Esophagus squamous epithelium (tissue), 5 donors: ENCODE measurements at regions of chr5 and their contacts with region 1.

Region 1: GRCh38 chr5:147223948-147224791 is 10.7 kb upstream of the STK32A start:
- DNase-seq: no peak
- H3K4me3 ChIP-seq: no peak overlapping the region
- H3K27ac ChIP-seq: no peak overlapping the region
- H3K4me1 ChIP-seq: no peaks in the 10 kb centered on the region
- H3K27me3 ChIP-seq: no peaks in the 10 kb centered on the region
- CTCF ChIP-seq: peak; percentile 19 to 55 (median 45)
- POLR2A ChIP-seq: no peak

Region 2: DNA sequence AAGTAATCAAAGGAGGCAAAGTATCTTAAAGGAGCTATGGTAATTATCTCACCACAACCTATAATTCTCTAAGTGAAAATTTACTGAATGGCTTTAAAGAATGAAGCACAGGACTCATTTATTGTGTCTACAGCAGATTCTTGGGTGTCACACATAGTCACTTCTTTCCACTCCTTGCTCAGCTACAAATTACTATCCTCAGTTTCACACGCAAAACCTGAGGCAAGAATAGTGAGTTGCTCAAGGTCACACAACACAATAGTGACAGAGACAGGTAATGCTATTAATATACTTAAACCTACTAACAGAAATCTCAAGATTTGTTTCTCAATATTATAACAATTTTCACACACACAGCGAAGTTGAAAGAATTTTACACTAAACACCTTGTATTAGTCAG is 110.2 kb before region 1 on chr5:
- intact Hi-C with region 1: no loop called
- DNase-seq: no peak
- H3K4me3 ChIP-seq: no peak overlapping the region
- H3K27ac ChIP-seq: no peak overlapping the region
- H3K4me1 ChIP-seq: no peaks in the 10 kb centered on the region
- H3K27me3 ChIP-seq: no peaks in the 10 kb centered on the region
- CTCF ChIP-seq: no peak
- POLR2A ChIP-seq: no peak

Region 3: GRCh38 chr5:147369742-147370374 is 145.7 kb after region 1 on chr5:
- intact Hi-C with region 1: loop called (anchors 5 kb)
- DNase-seq: no peak
- H3K4me3 ChIP-seq: no peak overlapping the region
- H3K27ac ChIP-seq: no peak overlapping the region
- H3K4me1 ChIP-seq: no peaks in the 10 kb centered on the region
- H3K27me3 ChIP-seq: no peaks in the 10 kb centered on the region
- CTCF ChIP-seq: peak in 5 of 6 experiments; percentile 33 to 63 (median 45)
- POLR2A ChIP-seq: no peak

Region 4: GRCh38 chr5:147563466-147564123 is 339.4 kb after region 1 on chr5:
- intact Hi-C with region 1: no loop called
- DNase-seq: no peak
- H3K4me3 ChIP-seq: no peak overlapping the region
- H3K27ac ChIP-seq: no peak overlapping the region
- H3K4me1 ChIP-seq: peaks cover 0 to 4% (median 0%) of the 10 kb centered on the region in 3 donors
- H3K27me3 ChIP-seq: no peaks in the 10 kb centered on the region
- CTCF ChIP-seq: no peak
- POLR2A ChIP-seq: no peak

Region 5: GRCh38 chr5:147576646-147577535 is 352.7 kb after region 1 on chr5:
- intact Hi-C with region 1: loop called (anchors 10 kb)
- DNase-seq: no peak
- H3K4me3 ChIP-seq: no peak overlapping the region
- H3K27ac ChIP-seq: no peak overlapping the region
- H3K4me1 ChIP-seq: no peaks in the 10 kb centered on the region
- H3K27me3 ChIP-seq: no peaks in the 10 kb centered on the region
- CTCF ChIP-seq: peak in 5 of 6 experiments; percentile 76 to 86 (median 81)
- POLR2A ChIP-seq: no peak

Region 6: DNA sequence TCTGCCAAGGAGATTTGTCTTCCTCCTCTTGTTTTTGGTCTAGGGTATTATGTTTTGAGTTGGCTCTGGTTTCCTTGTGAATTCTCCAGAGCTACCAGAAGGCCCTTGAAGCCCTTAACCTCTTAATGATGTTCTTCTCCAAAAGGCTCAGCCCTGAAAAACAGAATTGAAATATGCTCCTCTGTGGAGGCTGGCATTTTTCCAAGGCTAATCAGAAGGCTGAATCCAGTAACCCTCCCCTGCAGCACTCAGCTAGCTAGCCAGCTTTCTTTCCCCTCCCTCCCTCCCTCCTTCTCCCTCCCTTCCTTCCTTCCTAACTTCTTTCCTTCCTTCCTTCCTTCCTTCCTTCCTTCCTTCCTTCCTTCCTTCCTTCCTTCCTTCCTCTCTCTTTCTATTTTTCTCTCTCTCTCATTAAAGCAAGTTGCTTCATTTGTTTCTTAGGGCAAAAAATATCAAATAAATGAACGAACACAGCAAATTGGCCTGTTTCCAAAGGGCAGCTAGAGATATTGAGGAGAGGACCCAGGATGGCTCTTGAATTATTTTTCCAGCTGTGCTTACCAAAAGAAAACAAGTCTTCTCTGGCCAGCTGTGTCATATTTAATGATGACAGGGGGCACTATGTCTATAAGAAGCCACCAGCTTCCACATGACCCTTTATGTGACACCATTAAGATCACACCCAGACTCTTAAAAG is 519.7 kb after region 1 on chr5:
- intact Hi-C with region 1: no loop called
- DNase-seq: no peak
- H3K4me3 ChIP-seq: no peak overlapping the region
- H3K27ac ChIP-seq: no peak overlapping the region
- H3K4me1 ChIP-seq: no peaks in the 10 kb centered on the region
- H3K27me3 ChIP-seq: no peaks in the 10 kb centered on the region
- CTCF ChIP-seq: no peak
- POLR2A ChIP-seq: no peak